MCF 10A (cell line): ENCODE measurements at regions of chr7 and their contacts with region 1.

Region 1: GRCh38 chr7:25098096-25099046 is 26.7 kb downstream of the CYCS start:
- DNase-seq: peak; percentile 72
- H3K4me3 Mint-ChIP-seq: no peak overlapping the region
- H3K27ac Mint-ChIP-seq: no peak overlapping the region
- H3K4me1 Mint-ChIP-seq: peaks cover 3% of the 10 kb centered on the region
- H3K27me3 Mint-ChIP-seq: no peaks in the 10 kb centered on the region
- CTCF ChIP-seq: peak; percentile 77

Region 2: DNA sequence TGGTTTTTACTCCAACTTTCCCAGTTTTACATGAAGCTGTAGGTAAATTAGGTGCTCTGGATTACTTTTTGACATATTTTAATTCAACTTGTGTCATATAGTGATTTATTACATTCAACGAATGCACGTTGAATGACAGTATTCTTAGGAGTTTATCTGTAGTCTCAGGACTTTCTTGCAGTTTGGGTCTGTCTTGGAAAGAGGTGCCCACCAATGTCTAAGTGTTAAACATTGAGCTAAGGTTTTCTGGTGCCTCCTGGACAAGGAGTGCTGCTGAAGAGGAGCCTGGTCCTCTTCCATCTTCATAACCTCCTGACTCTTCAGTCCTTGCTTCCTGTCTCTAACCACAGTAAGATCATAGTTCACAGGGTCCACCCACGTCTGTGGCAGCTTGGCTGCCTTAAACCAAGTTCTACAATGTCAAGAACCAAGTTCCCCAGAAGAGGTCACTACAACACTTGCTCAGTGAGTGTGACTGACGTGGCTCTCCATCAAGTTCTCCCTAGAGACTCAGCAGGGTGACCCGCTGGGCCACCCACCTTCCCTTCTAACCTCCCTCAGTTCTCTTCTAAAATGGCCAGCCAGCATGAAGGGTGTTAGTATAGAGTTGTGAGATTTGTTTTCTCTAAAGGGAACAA is 808.2 kb before region 1 on chr7:
- CTCF ChIA-PET with region 1: interaction called, 3 read pairs
- POLR2A ChIA-PET with region 1: no interaction called
- intact Hi-C with region 1: loop called (anchors 2 kb)
- DNase-seq: peak; percentile 74
- H3K4me3 Mint-ChIP-seq: no peak overlapping the region
- H3K27ac Mint-ChIP-seq: no peak overlapping the region
- H3K4me1 Mint-ChIP-seq: peaks cover 6% of the 10 kb centered on the region
- H3K27me3 Mint-ChIP-seq: peaks cover 14% of the 10 kb centered on the region
- CTCF ChIP-seq: peak; percentile 64

Region 3: GRCh38 chr7:24665564-24666294 is 432.6 kb before region 1 on chr7:
- CTCF ChIA-PET with region 1: interaction called, 25 read pairs
- POLR2A ChIA-PET with region 1: interaction called, 3 read pairs
- intact Hi-C with region 1: loop called (anchors 5 kb)
- DNase-seq: peak; percentile 68
- H3K4me3 Mint-ChIP-seq: no peak overlapping the region
- H3K27ac Mint-ChIP-seq: no peak overlapping the region
- H3K4me1 Mint-ChIP-seq: peaks cover 21% of the 10 kb centered on the region
- H3K27me3 Mint-ChIP-seq: no peaks in the 10 kb centered on the region
- CTCF ChIP-seq: peak; percentile 63

Region 4: GRCh38 chr7:24945899-24946298 is 152.5 kb before region 1 on chr7:
- CTCF ChIA-PET with region 1: no interaction called
- POLR2A ChIA-PET with region 1: no interaction called
- intact Hi-C with region 1: no loop called
- DNase-seq: no peak
- H3K4me3 Mint-ChIP-seq: no peak overlapping the region
- H3K27ac Mint-ChIP-seq: no peak overlapping the region
- H3K4me1 Mint-ChIP-seq: peaks cover 22% of the 10 kb centered on the region
- H3K27me3 Mint-ChIP-seq: no peaks in the 10 kb centered on the region
- CTCF ChIP-seq: no peak

Region 5: DNA sequence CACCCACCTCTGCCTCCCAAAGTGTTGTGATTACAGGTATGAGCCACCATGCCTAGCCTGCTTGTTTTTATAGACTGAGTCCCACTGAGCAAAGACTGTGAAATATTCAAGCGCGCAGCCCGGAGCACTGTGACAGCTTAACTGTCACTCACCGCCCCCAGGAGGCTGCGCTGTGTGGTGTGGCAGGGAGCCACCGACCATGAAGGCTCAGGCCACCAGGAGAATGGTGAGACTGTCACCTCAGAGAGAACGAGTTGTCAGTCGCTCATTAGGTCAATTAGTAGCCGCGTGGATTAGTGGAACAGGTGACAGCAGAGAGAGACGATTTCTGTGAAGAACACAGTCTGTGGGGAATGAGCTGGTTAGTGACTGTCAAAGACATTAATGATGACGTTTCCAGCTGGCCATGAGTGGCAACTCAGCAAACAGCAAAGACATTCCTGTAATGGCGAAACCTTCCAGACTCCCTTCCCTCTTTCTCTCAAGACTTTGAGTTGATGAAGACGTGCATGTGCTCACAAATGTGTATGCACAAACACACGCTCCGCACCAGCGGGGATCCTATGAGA is 37.8 kb before region 1 on chr7:
- CTCF ChIA-PET with region 1: interaction called, 16 read pairs
- POLR2A ChIA-PET with region 1: no interaction called
- intact Hi-C with region 1: no loop called
- DNase-seq: no peak
- H3K4me3 Mint-ChIP-seq: no peak overlapping the region
- H3K27ac Mint-ChIP-seq: no peak overlapping the region
- H3K4me1 Mint-ChIP-seq: no peaks in the 10 kb centered on the region
- H3K27me3 Mint-ChIP-seq: no peaks in the 10 kb centered on the region
- CTCF ChIP-seq: no peak

Region 6: DNA sequence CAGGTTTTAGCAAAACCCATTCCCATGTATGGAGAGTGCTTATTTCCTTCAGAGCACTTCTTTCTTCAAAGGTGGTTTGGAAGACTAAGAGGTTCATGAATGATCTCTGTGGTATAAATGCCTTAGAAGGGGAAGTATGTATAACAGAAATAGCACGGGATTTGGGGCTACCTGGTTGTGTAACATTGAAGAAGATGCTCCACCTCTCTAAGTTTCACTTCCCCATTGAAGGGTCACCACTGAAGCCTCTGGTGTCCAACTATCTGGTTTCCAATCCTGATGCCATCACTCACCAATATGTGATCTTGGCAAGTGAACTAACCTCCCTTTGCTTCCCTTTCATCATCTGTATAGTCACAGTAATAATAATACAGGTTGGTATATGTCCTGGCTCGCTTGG is 10.5 kb before region 1 on chr7:
- CTCF ChIA-PET with region 1: interaction called, 26 read pairs
- POLR2A ChIA-PET with region 1: no interaction called
- intact Hi-C with region 1: no loop called
- DNase-seq: no peak
- H3K4me3 Mint-ChIP-seq: no peak overlapping the region
- H3K27ac Mint-ChIP-seq: no peak overlapping the region
- H3K4me1 Mint-ChIP-seq: no peaks in the 10 kb centered on the region
- H3K27me3 Mint-ChIP-seq: no peaks in the 10 kb centered on the region
- CTCF ChIP-seq: no peak

Region 7: DNA sequence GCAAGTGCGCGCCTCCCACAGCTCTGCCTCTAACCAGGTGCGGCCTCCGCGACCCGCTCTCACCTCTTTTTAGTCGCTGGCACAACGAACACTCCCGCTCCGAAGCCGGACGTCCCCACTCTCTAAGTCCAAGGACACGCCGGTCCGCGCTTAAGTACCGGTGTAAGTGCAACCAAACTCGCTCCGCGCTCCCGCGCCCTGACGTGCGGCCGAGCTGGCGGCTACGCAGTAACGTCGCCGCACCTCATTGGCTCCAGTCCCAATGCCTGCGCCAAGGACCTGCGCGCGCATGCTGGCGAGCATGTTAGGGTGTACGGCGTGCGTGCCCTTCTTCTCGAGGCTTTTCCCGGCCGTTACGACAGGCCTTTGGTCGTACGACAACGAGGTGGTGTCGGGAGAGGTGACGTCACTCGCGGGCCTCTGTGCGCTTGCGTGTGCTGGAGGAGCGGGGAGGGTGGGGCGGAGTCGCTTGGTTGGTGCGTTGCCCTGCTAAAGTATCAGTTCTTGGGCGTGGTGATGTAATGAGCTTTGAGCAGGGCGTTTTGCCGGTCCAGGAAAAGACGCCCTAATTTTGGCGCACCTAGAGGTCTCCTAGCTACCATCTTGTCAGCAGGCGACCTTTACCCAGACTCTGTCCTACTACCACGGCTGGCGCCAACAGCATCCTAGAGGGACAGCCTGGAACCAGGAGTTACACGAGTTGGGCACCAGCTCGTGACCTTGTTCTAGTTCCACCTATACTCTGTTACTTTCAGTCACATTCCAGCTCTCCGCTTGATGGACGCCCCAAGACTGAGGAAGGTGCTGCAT is 27.0 kb after region 1 on chr7 and contains the start of gene CYCS:
- CTCF ChIA-PET with region 1: interaction called, 17 read pairs
- POLR2A ChIA-PET with region 1: interaction called, 8 read pairs
- intact Hi-C with region 1: no loop called
- DNase-seq: peak; percentile 100
- H3K4me3 Mint-ChIP-seq: peak within 1 kb of the TSS; percentile 95
- H3K27ac Mint-ChIP-seq: peak within 1 kb of the TSS; percentile 100
- H3K4me1 Mint-ChIP-seq: peaks cover 8% of the 10 kb centered on the region
- H3K27me3 Mint-ChIP-seq: no peaks in the 10 kb centered on the region
- CTCF ChIP-seq: no peak
- total RNA-seq, gene CYCS: 368 and 448 TPM in 2 replicates